ENCODE measurements at regions of chr4 and their contacts with region 1.

Region 1: DNA sequence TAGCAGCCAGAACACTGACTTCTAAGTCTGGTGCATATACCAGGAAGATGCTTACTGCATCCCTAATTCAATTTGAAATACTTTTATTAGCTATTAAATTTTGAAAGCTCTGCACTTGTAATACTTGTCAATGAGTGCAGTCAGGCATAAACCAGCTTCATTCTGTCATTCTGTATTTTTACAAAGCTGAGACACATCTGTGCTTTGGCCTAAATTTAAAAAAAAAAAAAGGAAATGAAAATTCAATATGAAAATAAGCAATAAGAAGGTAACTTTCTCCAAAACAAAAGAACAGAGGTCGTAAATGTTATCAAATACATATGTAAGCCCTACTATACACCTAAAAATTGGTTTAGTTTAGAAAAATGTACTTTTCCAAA is 7.0 kb downstream of the SMIM14 start:
- DNase-seq: peak; percentile 77
- ATAC-seq: peak; percentile 77
- H3K4me3 ChIP-seq: peak overlapping the region in 4 of 5 experiments; percentile 9 to 35 (median 32)
- H3K4me3 Mint-ChIP-seq: peak overlapping the region; percentile 80
- H3K27ac ChIP-seq: peak overlapping the region; percentile 87 to 91
- H3K27ac Mint-ChIP-seq: peak overlapping the region; percentile 60
- H3K4me1 ChIP-seq: peaks cover 80 to 94% of the 10 kb centered on the region in 2 donors
- H3K4me1 Mint-ChIP-seq: peaks cover 67% of the 10 kb centered on the region
- H3K27me3 ChIP-seq: no peaks in the 10 kb centered on the region
- H3K27me3 Mint-ChIP-seq: no peaks in the 10 kb centered on the region
- CTCF ChIP-seq: no peak

Region 2: DNA sequence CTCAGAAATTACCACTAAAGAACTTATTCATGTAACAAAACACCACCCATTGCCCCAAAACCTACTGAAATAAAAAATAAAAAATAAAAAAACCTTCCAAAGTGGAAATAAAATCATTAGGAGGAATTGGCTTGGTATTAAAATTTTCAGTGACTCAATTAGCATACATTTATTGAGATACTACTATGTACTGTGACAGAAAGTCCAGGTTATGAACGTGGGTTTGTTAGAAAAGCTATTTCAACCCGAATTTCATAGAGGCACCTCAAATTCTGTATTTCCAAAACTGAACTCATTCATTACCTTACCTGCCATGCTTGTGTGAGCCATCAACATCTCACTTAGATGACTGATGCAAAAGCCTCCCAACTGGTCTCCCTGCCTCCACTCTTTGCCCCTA is 552.9 kb before region 1 on chr4:
- CTCF ChIA-PET with region 1: no interaction called
- POLR2A ChIA-PET with region 1: no interaction called
- intact Hi-C with region 1: no loop called
- DNase-seq: no peak
- ATAC-seq: no peak
- H3K4me3 ChIP-seq: no peak overlapping the region
- H3K4me3 Mint-ChIP-seq: no peak overlapping the region
- H3K27ac ChIP-seq: no peak overlapping the region
- H3K27ac Mint-ChIP-seq: no peak overlapping the region
- H3K4me1 ChIP-seq: no peaks in the 10 kb centered on the region
- H3K4me1 Mint-ChIP-seq: peaks cover 5% of the 10 kb centered on the region
- H3K27me3 ChIP-seq: no peaks in the 10 kb centered on the region
- H3K27me3 Mint-ChIP-seq: no peaks in the 10 kb centered on the region
- CTCF ChIP-seq: no peak

Region 3: GRCh38 chr4:39527273-39528060 is 104.2 kb before region 1 on chr4 and contains the start of gene UGDH:
- CTCF ChIA-PET with region 1: interaction called, 6 read pairs
- POLR2A ChIA-PET with region 1: interaction called, 17 read pairs
- intact Hi-C with region 1: no loop called
- DNase-seq: peak; percentile 93
- ATAC-seq: peak; percentile 99
- H3K4me3 ChIP-seq: peak within 1 kb of the TSS; percentile 46 to 98 (median 72)
- H3K4me3 Mint-ChIP-seq: peak within 1 kb of the TSS; percentile 98
- H3K27ac ChIP-seq: peak within 1 kb of the TSS; percentile 51 to 86
- H3K27ac Mint-ChIP-seq: peak within 1 kb of the TSS; percentile 96
- H3K4me1 ChIP-seq: peaks cover 14 to 15% of the 10 kb centered on the region in 2 donors
- H3K4me1 Mint-ChIP-seq: peaks cover 21% of the 10 kb centered on the region
- H3K27me3 ChIP-seq: no peaks in the 10 kb centered on the region
- H3K27me3 Mint-ChIP-seq: no peaks in the 10 kb centered on the region
- CTCF ChIP-seq: no peak
- total RNA-seq, gene UGDH: 18.5 and 25.4 TPM in 2 replicates

Region 4: GRCh38 chr4:39597695-39598381 is 33.9 kb before region 1 on chr4:
- CTCF ChIA-PET with region 1: no interaction called
- POLR2A ChIA-PET with region 1: no interaction called
- intact Hi-C with region 1: loop called (anchors 5 kb)
- DNase-seq: no peak
- ATAC-seq: no peak
- H3K4me3 ChIP-seq: no peak overlapping the region
- H3K4me3 Mint-ChIP-seq: no peak overlapping the region
- H3K27ac ChIP-seq: peak overlapping the region in 1 of 2 donors; percentile 45
- H3K27ac Mint-ChIP-seq: peak overlapping the region; percentile 62
- H3K4me1 ChIP-seq: peaks cover 5 to 8% of the 10 kb centered on the region in 2 donors
- H3K4me1 Mint-ChIP-seq: peaks cover 16% of the 10 kb centered on the region
- H3K27me3 ChIP-seq: no peaks in the 10 kb centered on the region
- H3K27me3 Mint-ChIP-seq: no peaks in the 10 kb centered on the region
- CTCF ChIP-seq: no peak

Region 5: GRCh38 chr4:39609454-39609931 is 22.2 kb before region 1 on chr4:
- CTCF ChIA-PET with region 1: interaction called, 5 read pairs
- POLR2A ChIA-PET with region 1: interaction called, 12 read pairs
- intact Hi-C with region 1: loop called (anchors 1 kb)
- DNase-seq: peak; percentile 73
- ATAC-seq: peak; percentile 79
- H3K4me3 ChIP-seq: peak overlapping the region in 3 of 5 experiments; percentile 38 to 47 (median 45)
- H3K4me3 Mint-ChIP-seq: peak overlapping the region; percentile 73
- H3K27ac ChIP-seq: peak overlapping the region; percentile 57 to 69
- H3K27ac Mint-ChIP-seq: peak overlapping the region; percentile 73
- H3K4me1 ChIP-seq: peaks cover 49 to 55% of the 10 kb centered on the region in 2 donors
- H3K4me1 Mint-ChIP-seq: peaks cover 58% of the 10 kb centered on the region
- H3K27me3 ChIP-seq: no peaks in the 10 kb centered on the region
- H3K27me3 Mint-ChIP-seq: no peaks in the 10 kb centered on the region
- CTCF ChIP-seq: no peak

Region 6: GRCh38 chr4:39664828-39665731 is 33.4 kb after region 1 on chr4:
- CTCF ChIA-PET with region 1: no interaction called
- POLR2A ChIA-PET with region 1: interaction called, 13 read pairs
- intact Hi-C with region 1: no loop called
- DNase-seq: no peak
- ATAC-seq: no peak
- H3K4me3 ChIP-seq: no peak overlapping the region
- H3K4me3 Mint-ChIP-seq: no peak overlapping the region
- H3K27ac ChIP-seq: no peak overlapping the region
- H3K27ac Mint-ChIP-seq: no peak overlapping the region
- H3K4me1 ChIP-seq: no peaks in the 10 kb centered on the region
- H3K4me1 Mint-ChIP-seq: no peaks in the 10 kb centered on the region
- H3K27me3 ChIP-seq: no peaks in the 10 kb centered on the region
- H3K27me3 Mint-ChIP-seq: no peaks in the 10 kb centered on the region
- CTCF ChIP-seq: no peak

Region 7: DNA sequence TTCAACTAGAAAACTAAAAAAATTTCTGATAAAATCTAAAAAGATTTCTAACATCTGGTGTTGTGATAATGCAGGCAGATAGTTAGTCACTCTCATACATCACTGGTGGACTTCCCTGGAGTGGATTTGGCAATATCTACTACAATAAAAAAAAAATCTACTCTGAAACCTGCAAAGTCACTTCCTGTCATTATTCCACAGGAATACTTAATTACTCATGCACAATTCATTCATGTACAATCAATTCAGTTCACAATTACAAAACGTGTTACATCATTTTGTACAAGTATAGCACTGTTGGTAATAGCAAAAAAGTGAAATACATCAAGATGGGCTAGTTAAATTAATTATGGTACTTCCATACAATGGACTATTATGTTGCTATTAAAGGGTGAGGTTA is 548.7 kb after region 1 on chr4:
- CTCF ChIA-PET with region 1: no interaction called
- POLR2A ChIA-PET with region 1: no interaction called
- intact Hi-C with region 1: no loop called
- DNase-seq: no peak
- ATAC-seq: no peak
- H3K4me3 ChIP-seq: no peak overlapping the region
- H3K4me3 Mint-ChIP-seq: no peak overlapping the region
- H3K27ac ChIP-seq: no peak overlapping the region
- H3K27ac Mint-ChIP-seq: no peak overlapping the region
- H3K4me1 ChIP-seq: peaks cover 35 to 42% of the 10 kb centered on the region in 2 donors
- H3K4me1 Mint-ChIP-seq: peaks cover 45% of the 10 kb centered on the region
- H3K27me3 ChIP-seq: no peaks in the 10 kb centered on the region
- H3K27me3 Mint-ChIP-seq: no peaks in the 10 kb centered on the region
- CTCF ChIP-seq: no peak